ENCODE measurements at regions of chr2 and their contacts with region 1.

Region 1: DNA sequence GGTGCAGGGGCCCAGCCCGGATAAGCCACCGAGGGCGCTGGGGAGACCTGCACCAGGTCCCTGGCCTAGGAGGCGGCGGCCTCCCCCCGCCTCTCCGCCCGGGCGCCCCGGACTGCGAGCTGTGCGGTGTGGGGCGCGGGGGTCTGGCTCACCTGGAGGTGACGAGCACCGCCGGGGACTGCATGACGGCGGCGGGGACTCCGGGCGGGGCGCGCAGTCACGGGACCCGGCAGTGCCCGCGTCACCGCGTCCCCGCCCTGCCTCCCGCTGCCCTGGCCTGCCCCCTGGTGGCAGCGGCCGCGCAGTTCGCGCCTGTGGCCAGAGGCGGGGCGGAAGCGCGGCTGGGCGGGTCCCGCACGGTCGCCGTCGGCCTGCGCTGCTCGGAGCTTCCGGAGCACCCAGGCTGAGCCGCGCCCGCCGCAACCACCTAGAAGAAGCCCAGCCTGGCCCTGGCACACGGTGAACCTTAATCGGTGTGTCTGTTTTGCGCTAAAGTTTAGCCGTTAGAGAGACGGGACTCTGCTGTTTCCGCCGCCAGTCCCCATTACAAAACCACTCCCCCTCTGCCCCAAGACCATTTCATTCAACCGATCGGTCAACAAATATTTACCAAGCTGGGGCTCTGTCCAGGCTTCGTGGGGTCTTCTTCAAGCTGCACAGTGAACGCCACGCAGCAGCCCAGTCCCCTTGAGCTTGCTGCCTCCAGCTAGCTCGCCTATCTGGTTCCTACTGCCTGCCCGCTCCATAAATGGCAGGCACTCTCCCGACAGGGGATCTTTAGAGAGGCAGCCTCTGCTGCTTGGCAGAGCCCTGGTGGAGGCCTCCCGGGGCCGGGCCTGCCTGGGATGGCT is at the start of gene HS1BP3:
- DNase-seq: peak; percentile 85
- ATAC-seq: peak; percentile 97
- H3K4me3 Mint-ChIP-seq: peak within 1 kb of the TSS; percentile 77
- H3K27ac Mint-ChIP-seq: peak within 1 kb of the TSS; percentile 85
- H3K4me1 Mint-ChIP-seq: peaks cover 17% of the 10 kb centered on the region
- H3K27me3 Mint-ChIP-seq: no peaks in the 10 kb centered on the region
- CTCF ChIP-seq: peak; percentile 83
- total RNA-seq, gene HS1BP3: 6.5 to 7.9 TPM

Region 2: DNA sequence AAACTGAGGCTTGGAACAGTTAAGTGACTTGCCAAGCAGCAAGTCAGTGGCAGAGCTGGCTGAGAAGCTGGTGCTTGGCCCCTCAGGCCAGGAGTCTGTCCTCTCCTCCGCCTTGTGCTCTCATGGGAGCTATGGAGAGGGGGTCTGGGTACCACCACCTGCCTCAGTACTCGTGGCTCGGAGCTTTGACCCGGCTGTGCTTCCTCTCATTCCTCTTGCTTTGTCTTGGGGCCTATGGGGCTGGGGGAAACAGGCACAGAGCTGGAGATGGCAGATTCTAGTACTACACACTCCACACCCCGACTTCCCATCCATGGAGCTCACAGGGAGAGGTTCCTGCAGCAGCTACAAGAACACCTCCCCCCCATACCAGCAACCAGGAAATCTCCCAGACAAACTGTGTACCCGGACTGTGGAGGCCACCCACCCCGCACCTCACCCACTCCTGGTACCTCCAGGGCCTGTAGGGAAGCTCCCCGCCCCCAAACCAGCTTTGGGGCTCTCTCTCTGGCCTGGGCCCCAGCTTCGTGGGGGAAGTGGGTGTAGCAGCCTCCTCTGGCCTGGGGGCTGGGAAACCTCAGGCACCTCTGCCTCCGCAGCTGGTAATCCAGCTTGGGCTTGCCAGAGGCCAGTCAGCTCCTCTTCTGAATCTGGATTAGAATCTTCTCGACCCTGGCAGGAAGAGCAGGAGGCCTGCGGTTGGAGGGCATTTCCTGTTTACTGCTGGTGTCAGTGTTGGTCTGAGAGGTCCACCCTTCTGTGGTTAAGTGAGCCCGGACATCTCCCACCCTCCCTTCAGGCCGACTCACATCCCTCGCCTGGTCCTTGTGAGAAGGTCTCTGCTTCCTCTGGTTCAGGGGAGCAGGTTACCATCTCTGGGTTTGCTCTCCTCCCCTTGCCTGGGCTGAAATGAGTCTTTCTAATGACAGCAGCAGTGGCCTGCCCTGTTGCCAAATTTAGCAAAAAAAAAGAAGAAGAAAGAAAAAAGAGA is 226.5 kb before region 1 on chr2:
- CTCF ChIA-PET with region 1: interaction called, 11 read pairs
- POLR2A ChIA-PET with region 1: no interaction called
- intact Hi-C with region 1: no loop called
- DNase-seq: peak; percentile 41
- ATAC-seq: peak; percentile 63
- H3K4me3 Mint-ChIP-seq: no peak overlapping the region
- H3K27ac Mint-ChIP-seq: peak overlapping the region; percentile 17
- H3K4me1 Mint-ChIP-seq: peaks cover 14% of the 10 kb centered on the region
- H3K27me3 Mint-ChIP-seq: no peaks in the 10 kb centered on the region
- CTCF ChIP-seq: no peak

Region 3: DNA sequence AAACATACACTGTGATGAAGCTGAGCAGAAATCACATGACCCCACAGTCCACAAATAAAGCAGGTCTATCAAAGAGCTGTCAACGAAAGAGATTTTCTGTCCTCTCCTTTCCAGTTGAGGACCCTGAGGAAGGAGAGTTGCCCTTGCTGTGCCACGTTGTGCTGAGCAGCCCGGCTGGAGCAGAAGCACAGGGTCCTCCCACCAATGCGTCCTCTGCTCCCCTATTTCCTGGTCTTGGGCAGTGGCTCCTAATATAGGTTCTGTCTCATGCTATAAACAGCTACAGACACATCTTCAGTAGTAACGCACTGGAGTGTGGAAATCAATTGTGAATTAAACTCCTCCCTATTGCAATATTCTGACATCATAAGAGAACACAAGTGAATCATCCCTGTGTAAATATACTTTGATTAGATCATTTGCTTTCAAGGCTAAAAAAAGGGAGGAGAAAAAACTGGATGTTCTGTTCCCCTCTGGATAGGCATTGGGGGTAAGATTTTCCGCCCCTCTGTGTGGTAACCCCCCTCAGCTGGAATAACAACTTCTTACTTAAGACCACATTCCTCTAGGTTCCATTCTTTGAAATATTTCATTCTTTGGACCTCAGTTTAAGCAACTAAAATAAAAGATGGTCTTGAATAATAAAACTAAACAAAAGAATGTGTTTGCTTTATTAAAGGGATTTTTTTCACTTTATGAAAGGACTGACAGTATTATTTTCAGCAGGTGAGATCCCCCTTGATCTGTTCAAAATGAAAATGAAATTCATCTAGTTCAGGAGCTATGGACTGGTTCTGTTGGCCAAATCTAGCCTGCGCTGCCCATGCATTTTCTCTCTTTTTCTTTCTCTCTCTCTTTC is 212.5 kb before region 1 on chr2:
- CTCF ChIA-PET with region 1: interaction called, 35 read pairs
- POLR2A ChIA-PET with region 1: no interaction called
- intact Hi-C with region 1: no loop called
- DNase-seq: no peak
- ATAC-seq: no peak
- H3K4me3 Mint-ChIP-seq: no peak overlapping the region
- H3K27ac Mint-ChIP-seq: no peak overlapping the region
- H3K4me1 Mint-ChIP-seq: no peaks in the 10 kb centered on the region
- H3K27me3 Mint-ChIP-seq: peaks cover 11% of the 10 kb centered on the region
- CTCF ChIP-seq: no peak

Region 4: DNA sequence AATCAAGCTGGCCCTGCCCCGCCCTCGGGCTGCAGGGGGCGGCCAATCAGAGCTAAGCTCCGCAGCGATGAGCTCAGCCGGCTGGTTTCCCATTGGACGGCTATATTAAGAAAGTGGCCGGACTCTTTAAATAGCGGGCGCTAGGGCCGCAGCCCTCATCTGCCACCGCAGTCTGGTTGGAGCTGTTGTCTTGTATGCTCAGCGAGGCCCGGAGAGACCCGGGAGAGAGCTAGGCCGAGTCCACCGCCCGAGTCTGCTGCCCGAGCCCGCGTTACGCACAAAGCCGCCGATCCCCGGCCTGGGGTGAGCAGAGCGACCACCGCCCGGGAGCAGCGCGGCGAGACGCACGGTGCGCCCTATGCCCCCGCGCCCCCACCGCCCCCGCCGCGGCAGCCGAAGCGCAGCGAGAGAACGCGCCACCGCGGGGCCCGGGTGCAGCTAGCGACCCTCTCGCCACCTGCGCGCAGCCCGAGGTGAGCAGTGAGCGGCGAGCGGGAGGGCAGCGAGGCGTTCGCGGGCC is 204.1 kb before region 1 on chr2 and contains the start of gene RHOB:
- CTCF ChIA-PET with region 1: interaction called, 35 read pairs
- POLR2A ChIA-PET with region 1: interaction called, 14 read pairs
- intact Hi-C with region 1: no loop called
- DNase-seq: peak; percentile 95
- ATAC-seq: peak; percentile 99
- H3K4me3 Mint-ChIP-seq: peak within 1 kb of the TSS; percentile 80
- H3K27ac Mint-ChIP-seq: peak within 1 kb of the TSS; percentile 64
- H3K4me1 Mint-ChIP-seq: peaks cover 8% of the 10 kb centered on the region
- H3K27me3 Mint-ChIP-seq: peaks cover 4% of the 10 kb centered on the region
- CTCF ChIP-seq: no peak
- total RNA-seq, gene RHOB: 14.2 to 15.4 TPM

Region 5: DNA sequence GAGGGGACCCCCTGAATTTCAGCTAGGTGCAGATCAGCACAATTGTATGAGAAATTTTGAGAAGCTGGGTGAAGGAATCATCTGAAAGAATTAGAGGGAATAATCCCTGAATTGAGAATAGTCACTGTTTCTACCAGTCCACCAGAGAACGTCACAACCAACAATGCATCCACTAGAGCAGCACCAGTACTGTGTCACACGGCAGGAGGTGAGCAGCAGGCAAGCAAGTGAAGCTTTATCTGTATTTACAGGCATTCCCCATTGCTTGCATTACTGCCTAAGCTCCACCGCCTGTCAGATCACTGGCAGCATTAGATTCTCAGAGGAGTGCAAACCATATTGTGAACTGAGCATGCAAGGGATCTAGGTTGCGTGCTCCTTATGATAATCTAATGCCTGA is 56.5 kb after region 1 on chr2:
- CTCF ChIA-PET with region 1: no interaction called
- POLR2A ChIA-PET with region 1: no interaction called
- intact Hi-C with region 1: no loop called
- DNase-seq: no peak
- ATAC-seq: no peak
- H3K4me3 Mint-ChIP-seq: no peak overlapping the region
- H3K27ac Mint-ChIP-seq: no peak overlapping the region
- H3K4me1 Mint-ChIP-seq: no peaks in the 10 kb centered on the region
- H3K27me3 Mint-ChIP-seq: no peaks in the 10 kb centered on the region
- CTCF ChIP-seq: no peak

Region 6: GRCh38 chr2:20934236-20934635 is 283.1 kb after region 1 on chr2:
- CTCF ChIA-PET with region 1: no interaction called
- POLR2A ChIA-PET with region 1: no interaction called
- intact Hi-C with region 1: no loop called
- DNase-seq: no peak
- ATAC-seq: no peak
- H3K4me3 Mint-ChIP-seq: no peak overlapping the region
- H3K27ac Mint-ChIP-seq: no peak overlapping the region
- H3K4me1 Mint-ChIP-seq: no peaks in the 10 kb centered on the region
- H3K27me3 Mint-ChIP-seq: peaks cover 10% of the 10 kb centered on the region
- CTCF ChIP-seq: no peak

Measured in activated CD8-positive, alpha-beta T cell treated with anti-CD3 and anti-CD28 coated beads for 36 hours (primary cell).